ENCODE measurements at regions of chr6 and their contacts with region 1.

Region 1: GRCh38 chr6:106608062-106608668 is 21.1 kb downstream of the RTN4IP1 start:
- DNase-seq: peak in 3 of 6 donors; percentile 15 to 39 (median 25)
- ATAC-seq: peak; percentile 67 to 97 (median 94)
- H3K4me3 ChIP-seq: no peak overlapping the region
- H3K27ac ChIP-seq: no peak overlapping the region
- H3K4me1 ChIP-seq: no peaks in the 10 kb centered on the region
- H3K27me3 ChIP-seq: no peaks in the 10 kb centered on the region
- CTCF ChIP-seq: peak; percentile 42 to 54 (median 49)

Region 2: GRCh38 chr6:106287205-106287604 is 321.0 kb before region 1 on chr6:
- intact Hi-C with region 1: no loop called
- DNase-seq: no peak
- ATAC-seq: no peak
- H3K4me3 ChIP-seq: no peak overlapping the region
- H3K27ac ChIP-seq: no peak overlapping the region
- H3K4me1 ChIP-seq: peaks cover 0 to 5% (median 0%) of the 10 kb centered on the region in 3 donors
- H3K27me3 ChIP-seq: no peaks in the 10 kb centered on the region
- CTCF ChIP-seq: no peak

Region 3: DNA sequence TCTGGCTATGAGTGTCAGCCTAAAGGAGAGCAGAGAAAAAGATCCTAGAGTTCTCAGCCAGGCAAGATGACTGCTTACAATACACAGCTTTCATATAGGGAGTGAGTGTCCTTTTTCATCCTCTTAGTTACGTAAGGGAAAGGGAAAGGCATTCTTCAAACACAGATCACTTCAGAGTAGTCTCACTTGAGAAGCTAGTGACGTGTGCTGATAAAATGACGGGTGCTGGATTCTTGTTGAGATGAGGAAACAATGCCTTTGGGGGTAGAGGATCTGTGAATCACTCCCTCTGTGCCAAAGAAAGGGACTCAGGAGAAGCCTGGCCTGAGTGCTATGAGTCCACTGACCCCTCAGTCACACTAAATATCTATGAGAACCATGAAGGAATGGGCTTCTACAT is 138.5 kb after region 1 on chr6:
- intact Hi-C with region 1: no loop called
- DNase-seq: no peak
- ATAC-seq: peak in 1 of 4 donors; percentile 2
- H3K4me3 ChIP-seq: no peak overlapping the region
- H3K27ac ChIP-seq: peak overlapping the region in 2 of 4 donors; percentile 45 to 54
- H3K4me1 ChIP-seq: peaks cover 23 to 51% (median 36%) of the 10 kb centered on the region in 3 donors
- H3K27me3 ChIP-seq: no peaks in the 10 kb centered on the region
- CTCF ChIP-seq: no peak

Region 4: DNA sequence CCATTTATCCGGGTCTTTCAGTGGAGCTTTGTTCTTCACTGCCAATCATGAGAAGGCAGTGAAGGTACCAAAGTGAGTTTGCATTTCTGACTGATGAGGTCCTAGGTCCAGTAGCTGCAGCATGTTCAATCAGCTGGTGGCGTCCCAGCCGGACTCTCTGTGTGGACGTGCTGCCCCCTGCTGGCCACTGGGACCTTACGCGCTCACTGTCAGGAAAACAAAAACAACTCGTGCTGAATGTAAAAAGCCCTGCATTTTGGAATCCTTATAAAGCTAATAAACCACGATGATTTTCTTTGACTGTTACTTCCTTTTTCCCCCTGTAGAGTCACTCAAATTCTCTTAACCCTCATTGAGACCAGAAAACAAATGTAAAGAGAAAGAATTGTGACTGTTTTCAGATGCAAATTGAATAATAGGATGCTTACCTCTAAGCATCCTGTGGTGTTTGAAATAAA is 371.3 kb after region 1 on chr6:
- intact Hi-C with region 1: loop called in 2 of 3 experiments (anchors 5 kb)
- DNase-seq: peak; percentile 80 to 97 (median 91)
- ATAC-seq: peak; percentile 33 to 65 (median 61)
- H3K4me3 ChIP-seq: no peak overlapping the region
- H3K27ac ChIP-seq: no peak overlapping the region
- H3K4me1 ChIP-seq: peaks cover 6 to 15% (median 7%) of the 10 kb centered on the region in 3 donors
- H3K27me3 ChIP-seq: no peaks in the 10 kb centered on the region
- CTCF ChIP-seq: peak; percentile 90 to 98 (median 94)

Region 5: GRCh38 chr6:107560657-107561056 is 952.5 kb after region 1 on chr6:
- intact Hi-C with region 1: no loop called
- DNase-seq: no peak
- ATAC-seq: peak; percentile 46 to 66 (median 56)
- H3K4me3 ChIP-seq: no peak overlapping the region
- H3K27ac ChIP-seq: peak overlapping the region in 1 of 4 donors; percentile 8
- H3K4me1 ChIP-seq: no peaks in the 10 kb centered on the region
- H3K27me3 ChIP-seq: no peaks in the 10 kb centered on the region
- CTCF ChIP-seq: no peak

Measured in pancreas (tissue), 10 donors.